ENCODE measurements at regions of chr4 and their contacts with region 1.

Region 1: GRCh38 chr4:48578132-48578968 is 88.3 kb downstream of the ZAR1 start:
- H3K4me3 ChIP-seq: no peak overlapping the region
- H3K27ac ChIP-seq: no peak overlapping the region
- H3K4me1 ChIP-seq: no peaks in the 10 kb centered on the region
- CTCF ChIP-seq: 0 out of 2 replicates have a peak, but pooled peaks have one; percentile 54

Region 2: GRCh38 chr4:48340965-48341775 is 237.2 kb before region 1 on chr4 and contains the start of gene SLAIN2:
- CTCF ChIA-PET with region 1: no interaction called
- POLR2A ChIA-PET with region 1: no interaction called
- H3K4me3 ChIP-seq: peak within 1 kb of the TSS; percentile 58
- H3K27ac ChIP-seq: peak within 1 kb of the TSS; percentile 87
- H3K4me1 ChIP-seq: peaks cover 5% of the 10 kb centered on the region; the same call in 1 of the 2 replicates
- CTCF ChIP-seq: peak; percentile 56; the same call in 1 of the 2 replicates

Region 3: DNA sequence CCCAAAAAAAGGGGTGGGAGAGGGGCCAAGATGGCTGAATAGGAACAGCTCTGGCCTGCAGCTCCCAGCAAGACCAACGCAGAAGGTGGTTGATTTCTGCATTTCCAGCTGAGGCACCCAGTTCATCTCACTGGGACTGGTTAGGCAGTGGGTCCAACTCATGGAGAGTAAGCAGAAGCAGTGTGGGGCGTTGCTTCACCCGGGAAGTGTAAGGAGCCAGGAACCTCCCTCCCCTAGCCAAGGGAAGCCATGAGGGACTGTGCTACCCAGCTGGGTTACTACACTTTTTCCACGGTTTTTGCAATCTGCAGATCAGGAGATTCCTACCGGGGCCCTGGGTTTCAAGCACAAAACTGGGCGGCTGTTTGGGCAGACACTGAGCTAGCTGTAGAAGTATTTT is 238.6 kb after region 1 on chr4:
- CTCF ChIA-PET with region 1: no interaction called
- POLR2A ChIA-PET with region 1: no interaction called
- H3K4me3 ChIP-seq: no peak overlapping the region
- H3K27ac ChIP-seq: no peak overlapping the region
- H3K4me1 ChIP-seq: no peaks in the 10 kb centered on the region
- CTCF ChIP-seq: no peak

Region 4: GRCh38 chr4:48963042-48963679 is 384.8 kb after region 1 on chr4:
- CTCF ChIA-PET with region 1: interaction called, 26 read pairs
- POLR2A ChIA-PET with region 1: no interaction called
- H3K4me3 ChIP-seq: no peak overlapping the region
- H3K27ac ChIP-seq: no peak overlapping the region
- H3K4me1 ChIP-seq: no peaks in the 10 kb centered on the region
- CTCF ChIP-seq: peak; percentile 40; the same call in 1 of the 2 replicates